Tibial artery (tissue), 4 donors: ENCODE measurements at regions of chr2 and their contacts with region 1.

Region 1: DNA sequence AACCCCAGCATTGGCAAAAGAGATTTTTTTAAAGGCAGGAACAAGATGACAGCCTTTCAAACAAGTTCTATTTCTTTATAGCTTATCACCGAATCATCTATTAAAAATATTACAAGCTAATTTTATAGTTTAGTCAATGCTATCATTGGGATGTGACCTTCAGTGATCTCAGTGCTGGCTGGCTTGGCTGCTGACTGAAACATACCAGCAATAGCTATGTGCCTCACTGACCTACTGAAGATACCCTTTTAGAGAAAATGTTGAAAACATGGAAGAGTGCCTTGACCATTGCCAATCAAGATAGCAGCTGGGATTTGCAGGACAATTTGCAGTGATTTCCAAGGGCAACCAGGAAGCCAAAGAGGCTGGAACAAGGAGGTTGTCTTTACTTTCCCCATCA is 44.0 kb downstream of the CSRNP3 start:
- DNase-seq: no peak
- H3K4me3 ChIP-seq: no peak overlapping the region
- H3K27ac ChIP-seq: no peak overlapping the region
- H3K4me1 ChIP-seq: no peaks in the 10 kb centered on the region
- H3K27me3 ChIP-seq: no peaks in the 10 kb centered on the region
- CTCF ChIP-seq: no peak

Region 2: DNA sequence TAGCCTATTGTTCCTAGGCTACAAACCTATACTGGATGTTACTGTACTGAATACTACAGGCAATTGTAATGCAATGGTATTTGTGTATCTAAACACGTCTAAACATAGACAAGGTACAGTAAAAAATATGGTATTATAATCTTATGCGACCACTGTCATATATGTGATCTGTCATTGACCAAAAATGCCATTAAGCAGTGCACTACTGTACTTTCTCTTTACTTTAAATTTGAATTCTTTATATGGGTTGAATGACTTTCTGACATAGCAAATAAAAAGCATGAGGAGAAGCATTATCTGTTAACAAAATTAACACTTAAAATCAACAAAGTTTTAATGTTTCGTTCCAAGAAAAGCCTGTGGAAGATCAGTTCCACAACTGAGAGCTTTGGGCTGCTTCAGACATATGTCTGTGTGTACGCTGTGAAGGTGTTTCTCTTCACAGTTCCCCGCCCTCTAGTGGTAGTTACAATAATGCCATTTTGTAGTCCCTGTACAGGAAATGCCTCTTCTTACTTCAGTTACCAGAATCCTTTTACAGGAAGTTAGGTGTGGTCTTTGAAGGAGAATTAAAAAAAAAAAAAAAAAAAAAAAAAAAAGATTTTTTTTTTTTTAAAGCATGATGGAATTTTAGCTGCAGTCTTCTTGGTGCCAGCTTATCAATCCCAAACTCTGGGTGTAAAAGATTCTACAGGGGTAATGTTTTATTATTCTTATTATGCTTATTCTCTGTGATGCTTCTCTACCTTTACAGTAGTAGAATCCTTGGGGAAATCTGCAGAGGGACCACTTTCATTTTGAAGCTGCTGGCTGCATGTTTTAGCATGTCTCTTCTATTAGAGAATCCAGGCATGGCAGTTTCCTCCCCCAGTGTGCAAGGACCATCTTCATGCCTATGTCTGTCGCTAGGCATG is 219.8 kb before region 1 on chr2:
- intact Hi-C with region 1: no loop called
- DNase-seq: no peak
- H3K4me3 ChIP-seq: no peak overlapping the region
- H3K27ac ChIP-seq: no peak overlapping the region
- H3K4me1 ChIP-seq: peaks cover 0 to 5% (median 0%) of the 10 kb centered on the region in 4 donors
- H3K27me3 ChIP-seq: no peaks in the 10 kb centered on the region
- CTCF ChIP-seq: peak; percentile 62 to 65

Region 3: GRCh38 chr2:165558832-165559231 is 45.4 kb after region 1 on chr2:
- intact Hi-C with region 1: loop called (anchors 5 kb)
- DNase-seq: no peak
- H3K4me3 ChIP-seq: no peak overlapping the region
- H3K27ac ChIP-seq: no peak overlapping the region
- H3K4me1 ChIP-seq: no peaks in the 10 kb centered on the region
- H3K27me3 ChIP-seq: no peaks in the 10 kb centered on the region
- CTCF ChIP-seq: no peak